ENCODE measurements at regions of chr2 and their contacts with region 1.

Region 1: DNA sequence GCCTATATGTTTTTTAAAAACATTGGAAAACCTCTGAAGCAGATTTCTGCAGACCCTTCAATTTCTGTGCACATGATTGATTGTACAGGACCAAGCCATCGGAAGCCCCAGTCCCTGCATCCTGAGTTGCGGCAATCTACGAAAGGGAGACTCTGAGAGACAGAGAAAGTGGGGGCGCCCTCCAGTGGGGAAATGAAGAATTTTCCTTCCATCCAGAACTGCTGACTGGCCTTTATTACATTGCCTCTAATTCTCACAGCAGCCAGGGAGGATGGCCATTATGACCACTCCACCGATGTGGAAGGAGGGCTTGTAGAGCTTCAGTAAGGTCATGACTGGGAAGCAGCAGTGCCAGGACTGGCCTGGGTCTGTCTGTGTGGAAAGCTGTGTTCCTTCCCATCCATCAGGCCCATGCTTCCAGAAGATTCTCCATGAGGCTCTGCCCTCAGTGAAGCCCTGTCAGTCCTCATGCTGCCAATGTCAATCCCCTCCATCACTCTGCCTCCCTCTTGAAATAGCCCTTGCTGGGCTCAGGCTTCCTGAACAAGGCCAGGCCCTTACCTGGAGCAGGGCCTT is 20.0 kb upstream of the RESP18 start:
- DNase-seq: peak; percentile 77
- H3K4me3 ChIP-seq: no peak overlapping the region
- H3K27ac ChIP-seq: no peak overlapping the region
- H3K4me1 ChIP-seq: no peaks in the 10 kb centered on the region
- H3K27me3 ChIP-seq: peaks cover 19% of the 10 kb centered on the region
- CTCF ChIP-seq: peak; percentile 81

Region 2: DNA sequence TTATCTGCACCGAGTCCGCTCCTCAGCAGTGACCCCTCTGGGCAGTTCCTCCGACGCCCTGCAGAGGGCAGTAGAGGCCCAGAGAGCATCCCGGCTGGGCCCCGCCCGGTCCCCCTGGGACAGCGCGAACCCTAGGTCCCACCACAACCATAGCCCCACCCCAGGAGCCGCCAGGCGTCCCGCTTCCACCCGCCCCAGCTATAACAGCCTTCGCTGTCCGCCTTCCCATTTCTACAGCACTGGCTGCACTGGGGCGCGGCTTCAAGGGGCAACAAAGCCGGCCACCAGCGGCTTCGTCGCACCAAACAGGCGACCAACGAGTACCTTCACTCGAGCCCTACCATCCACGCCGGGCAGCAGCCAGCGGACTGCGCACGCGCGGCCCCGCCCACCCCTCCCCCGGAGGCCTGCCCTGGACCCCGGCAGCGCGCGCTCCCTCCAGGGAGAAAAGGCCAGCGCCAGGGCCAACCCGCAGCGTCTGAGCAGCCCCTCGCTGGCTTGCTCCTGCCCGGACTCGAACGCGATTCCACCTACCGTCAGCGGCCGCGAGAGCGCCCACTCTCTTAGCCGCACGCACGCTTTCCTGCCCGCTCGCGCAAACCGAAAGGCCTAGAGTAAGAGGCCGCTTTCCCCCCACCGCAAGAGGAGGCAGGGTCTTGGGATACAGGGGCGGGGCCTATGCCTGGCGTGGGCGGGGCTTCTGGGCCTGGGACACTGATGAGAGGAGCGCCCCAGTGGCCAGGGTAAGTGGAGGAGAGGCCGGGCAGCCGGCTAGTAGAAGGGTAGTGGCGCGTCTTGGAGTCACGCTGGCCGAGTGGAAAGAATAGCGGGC is 192.1 kb before region 1 on chr2 and contains the start of gene NHEJ1:
- CTCF ChIA-PET with region 1: no interaction called
- POLR2A ChIA-PET with region 1: no interaction called
- intact Hi-C with region 1: loop called (anchors 5 kb)
- DNase-seq: peak; percentile 92
- H3K4me3 ChIP-seq: peak within 1 kb of the TSS; percentile 68
- H3K27ac ChIP-seq: peak within 1 kb of the TSS; percentile 89
- H3K4me1 ChIP-seq: peaks cover 4% of the 10 kb centered on the region
- H3K27me3 ChIP-seq: no peaks in the 10 kb centered on the region
- CTCF ChIP-seq: peak; percentile 98
- total RNA-seq, gene NHEJ1: 16.6 and 18.0 TPM in 2 replicates

Measured in A673 (cell line).